ENCODE measurements at regions of chr17 and their contacts with region 1.

Region 1: DNA sequence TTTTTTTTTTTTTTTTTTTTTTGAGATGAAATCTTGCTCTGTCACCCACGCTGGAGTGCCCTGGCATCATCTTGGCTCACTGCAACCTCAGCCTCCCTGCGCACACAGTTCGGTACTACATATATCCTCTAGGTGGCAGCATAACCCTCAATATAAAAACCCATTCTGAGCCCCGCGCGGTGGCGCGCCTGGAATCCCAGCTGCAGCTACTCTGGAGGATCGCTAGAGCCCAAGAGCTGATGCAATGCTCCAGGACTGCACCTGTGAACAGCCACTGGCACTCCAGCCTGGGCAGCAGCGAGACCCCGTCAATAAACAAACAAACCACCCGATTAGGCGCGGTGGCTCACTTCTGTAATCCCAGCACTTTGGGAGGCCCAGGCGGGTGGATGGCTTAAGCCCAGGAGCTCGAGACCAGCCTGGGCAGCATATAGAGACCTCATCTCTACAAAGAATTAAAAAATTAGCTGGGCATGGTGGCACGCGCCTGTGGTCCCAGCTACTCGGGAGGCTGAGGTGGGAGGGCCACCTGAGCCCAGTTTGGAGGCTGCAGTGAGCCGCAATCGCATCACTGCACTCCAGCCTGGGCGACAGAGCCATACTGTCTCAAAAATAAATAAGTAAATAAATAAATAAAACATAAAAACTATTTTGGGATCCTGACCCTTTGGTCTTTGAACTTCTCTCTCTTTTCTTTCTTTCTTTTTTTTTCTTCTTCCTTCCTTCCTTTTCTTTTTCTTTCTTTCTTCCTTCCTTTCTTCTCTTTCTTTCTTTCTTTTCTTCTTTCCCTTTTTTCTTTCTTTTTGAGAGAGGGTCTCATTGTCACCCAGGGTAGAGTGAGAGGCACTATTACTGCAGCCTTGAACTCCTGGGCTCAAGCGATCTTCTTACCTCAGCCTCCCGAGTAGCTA is 15.4 kb upstream of the AKAP10 start:
- DNase-seq: peak; percentile 39 to 87 (median 76)
- ATAC-seq: peak; percentile 99
- H3K4me3 ChIP-seq: no peak overlapping the region
- H3K4me3 Mint-ChIP-seq: no peak overlapping the region
- H3K27ac ChIP-seq: no peak overlapping the region
- H3K27ac Mint-ChIP-seq: no peak overlapping the region
- H3K4me1 ChIP-seq: peaks cover 3% of the 10 kb centered on the region
- H3K4me1 Mint-ChIP-seq: peaks cover 4% of the 10 kb centered on the region
- H3K27me3 ChIP-seq: no peaks in the 10 kb centered on the region
- H3K27me3 Mint-ChIP-seq: peaks cover 5% of the 10 kb centered on the region
- CTCF ChIP-seq: peak; percentile 59

Region 2: GRCh38 chr17:19567216-19568015 is 425.6 kb before region 1 on chr17:
- CTCF ChIA-PET with region 1: no interaction called
- POLR2A ChIA-PET with region 1: no interaction called
- intact Hi-C with region 1: no loop called
- DNase-seq: no peak
- ATAC-seq: no peak
- H3K4me3 ChIP-seq: no peak overlapping the region
- H3K4me3 Mint-ChIP-seq: no peak overlapping the region
- H3K27ac ChIP-seq: no peak overlapping the region
- H3K27ac Mint-ChIP-seq: no peak overlapping the region
- H3K4me1 ChIP-seq: no peaks in the 10 kb centered on the region
- H3K4me1 Mint-ChIP-seq: no peaks in the 10 kb centered on the region
- H3K27me3 ChIP-seq: no peaks in the 10 kb centered on the region
- H3K27me3 Mint-ChIP-seq: peaks cover 4% of the 10 kb centered on the region
- CTCF ChIP-seq: no peak

Region 3: GRCh38 chr17:20063665-20064648 is 70.9 kb after region 1 on chr17:
- CTCF ChIA-PET with region 1: no interaction called
- POLR2A ChIA-PET with region 1: no interaction called
- intact Hi-C with region 1: no loop called
- DNase-seq: peak in 1 of 9 experiments; percentile 22
- ATAC-seq: no peak
- H3K4me3 ChIP-seq: no peak overlapping the region
- H3K4me3 Mint-ChIP-seq: no peak overlapping the region
- H3K27ac ChIP-seq: no peak overlapping the region
- H3K27ac Mint-ChIP-seq: no peak overlapping the region
- H3K4me1 ChIP-seq: no peaks in the 10 kb centered on the region
- H3K4me1 Mint-ChIP-seq: no peaks in the 10 kb centered on the region
- H3K27me3 ChIP-seq: no peaks in the 10 kb centered on the region
- H3K27me3 Mint-ChIP-seq: no peaks in the 10 kb centered on the region
- CTCF ChIP-seq: no peak

Region 4: GRCh38 chr17:20114466-20114865 is 121.4 kb after region 1 on chr17:
- CTCF ChIA-PET with region 1: interaction called, 59 read pairs
- POLR2A ChIA-PET with region 1: no interaction called
- intact Hi-C with region 1: loop called (anchors 1 kb)
- DNase-seq: no peak
- ATAC-seq: no peak
- H3K4me3 ChIP-seq: no peak overlapping the region
- H3K4me3 Mint-ChIP-seq: no peak overlapping the region
- H3K27ac ChIP-seq: no peak overlapping the region
- H3K27ac Mint-ChIP-seq: no peak overlapping the region
- H3K4me1 ChIP-seq: no peaks in the 10 kb centered on the region
- H3K4me1 Mint-ChIP-seq: peaks cover 2% of the 10 kb centered on the region
- H3K27me3 ChIP-seq: no peaks in the 10 kb centered on the region
- H3K27me3 Mint-ChIP-seq: no peaks in the 10 kb centered on the region
- CTCF ChIP-seq: no peak

Region 5: GRCh38 chr17:20315821-20316220 is 322.8 kb after region 1 on chr17:
- CTCF ChIA-PET with region 1: interaction called, 5 read pairs
- POLR2A ChIA-PET with region 1: no interaction called
- intact Hi-C with region 1: loop called in 1 of 2 experiments (anchors 2 kb)
- DNase-seq: no peak
- ATAC-seq: no peak
- H3K4me3 ChIP-seq: no peak overlapping the region
- H3K4me3 Mint-ChIP-seq: no peak overlapping the region
- H3K27ac ChIP-seq: no peak overlapping the region
- H3K27ac Mint-ChIP-seq: no peak overlapping the region
- H3K4me1 ChIP-seq: no peaks in the 10 kb centered on the region
- H3K4me1 Mint-ChIP-seq: no peaks in the 10 kb centered on the region
- H3K27me3 ChIP-seq: no peaks in the 10 kb centered on the region
- H3K27me3 Mint-ChIP-seq: no peaks in the 10 kb centered on the region
- CTCF ChIP-seq: no peak

Measured in CD8-positive, alpha-beta T cell (primary cell).